ENCODE measurements at regions of chr14 and their contacts with region 1.

Region 1: GRCh38 chr14:33792720-33793368 is 158.0 kb downstream of the EGLN3 start:
- DNase-seq: peak; percentile 80 to 98 (median 90)

Region 2: GRCh38 chr14:33184587-33184986 is 608.3 kb before region 1 on chr14:
- intact Hi-C with region 1: loop called (anchors 10 kb)
- DNase-seq: peak in 3 of 10 donors; percentile 12 to 71 (median 32)

Region 3: GRCh38 chr14:33259578-33260163 is 533.2 kb before region 1 on chr14:
- intact Hi-C with region 1: no loop called
- DNase-seq: peak in 1 of 10 donors; percentile 38

Region 4: DNA sequence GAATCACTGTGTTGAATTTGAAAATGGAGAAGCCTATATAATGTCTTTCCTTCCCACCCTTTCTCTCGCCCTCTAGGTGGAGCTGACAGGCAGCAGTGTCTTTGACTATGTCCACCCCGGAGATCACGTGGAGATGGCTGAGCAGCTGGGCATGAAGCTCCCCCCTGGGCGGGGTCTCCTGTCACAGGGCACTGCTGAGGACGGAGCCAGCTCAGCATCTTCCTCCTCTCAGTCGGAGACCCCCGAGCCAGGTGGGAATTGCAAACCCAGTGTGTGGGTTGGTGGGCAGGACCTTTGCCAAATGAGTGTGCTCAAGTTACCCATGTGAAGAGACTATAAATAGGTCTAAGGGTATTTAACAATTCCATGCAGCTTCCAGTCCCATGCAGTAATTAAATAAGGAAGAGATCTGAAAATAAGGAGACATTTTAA is 116.7 kb before region 1 on chr14:
- intact Hi-C with region 1: loop called (anchors 5 kb)
- DNase-seq: peak; percentile 34 to 93 (median 49)